Transverse colon (tissue), 4 donors: ENCODE measurements at regions of chr4 and their contacts with region 1.

Region 1: DNA sequence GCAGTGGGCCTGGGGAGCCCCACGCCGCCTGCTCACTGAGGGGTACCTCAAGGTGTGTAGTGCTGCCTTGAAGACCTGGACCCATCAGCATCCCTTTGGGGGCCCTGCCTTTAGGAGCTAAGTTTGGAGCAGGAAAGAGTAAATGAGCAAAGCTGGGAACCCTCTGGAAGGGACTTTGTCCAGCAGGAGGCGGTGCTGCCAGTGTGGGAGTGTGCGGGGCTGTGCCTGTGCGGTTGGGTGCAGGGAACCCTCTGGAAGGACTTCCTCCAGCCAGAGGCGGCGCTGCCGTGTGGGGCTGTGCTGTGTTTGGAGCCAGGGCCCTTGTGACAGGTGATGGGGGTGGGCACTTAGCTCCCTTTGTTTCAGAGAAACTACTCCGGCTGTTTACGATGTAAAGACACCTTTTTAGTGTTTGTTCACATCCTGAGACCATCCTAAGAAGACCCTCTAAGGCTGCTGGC is 25.8 kb downstream of the RGS12 start:
- DNase-seq: no peak
- H3K4me3 ChIP-seq: no peak overlapping the region
- H3K27ac ChIP-seq: no peak overlapping the region
- H3K4me1 ChIP-seq: peaks cover 0 to 5% (median 0%) of the 10 kb centered on the region in 4 donors
- H3K27me3 ChIP-seq: no peaks in the 10 kb centered on the region
- CTCF ChIP-seq: no peak
- EP300 ChIP-seq: no peak
- POLR2A ChIP-seq: no peak

Region 2: GRCh38 chr4:3363411-3364141 is 45.0 kb after region 1 on chr4:
- in situ Hi-C with region 1: no loop called
- intact Hi-C with region 1: loop called (anchors 1 kb)
- DNase-seq: no peak
- H3K4me3 ChIP-seq: no peak overlapping the region
- H3K27ac ChIP-seq: no peak overlapping the region
- H3K4me1 ChIP-seq: peaks cover 0 to under 1% (median 0%) of the 10 kb centered on the region in 4 donors
- H3K27me3 ChIP-seq: no peaks in the 10 kb centered on the region
- CTCF ChIP-seq: no peak
- EP300 ChIP-seq: no peak
- POLR2A ChIP-seq: no peak